GM13977 (cell line): ENCODE measurements at regions of chr15 and their contacts with region 1.

Region 1: DNA sequence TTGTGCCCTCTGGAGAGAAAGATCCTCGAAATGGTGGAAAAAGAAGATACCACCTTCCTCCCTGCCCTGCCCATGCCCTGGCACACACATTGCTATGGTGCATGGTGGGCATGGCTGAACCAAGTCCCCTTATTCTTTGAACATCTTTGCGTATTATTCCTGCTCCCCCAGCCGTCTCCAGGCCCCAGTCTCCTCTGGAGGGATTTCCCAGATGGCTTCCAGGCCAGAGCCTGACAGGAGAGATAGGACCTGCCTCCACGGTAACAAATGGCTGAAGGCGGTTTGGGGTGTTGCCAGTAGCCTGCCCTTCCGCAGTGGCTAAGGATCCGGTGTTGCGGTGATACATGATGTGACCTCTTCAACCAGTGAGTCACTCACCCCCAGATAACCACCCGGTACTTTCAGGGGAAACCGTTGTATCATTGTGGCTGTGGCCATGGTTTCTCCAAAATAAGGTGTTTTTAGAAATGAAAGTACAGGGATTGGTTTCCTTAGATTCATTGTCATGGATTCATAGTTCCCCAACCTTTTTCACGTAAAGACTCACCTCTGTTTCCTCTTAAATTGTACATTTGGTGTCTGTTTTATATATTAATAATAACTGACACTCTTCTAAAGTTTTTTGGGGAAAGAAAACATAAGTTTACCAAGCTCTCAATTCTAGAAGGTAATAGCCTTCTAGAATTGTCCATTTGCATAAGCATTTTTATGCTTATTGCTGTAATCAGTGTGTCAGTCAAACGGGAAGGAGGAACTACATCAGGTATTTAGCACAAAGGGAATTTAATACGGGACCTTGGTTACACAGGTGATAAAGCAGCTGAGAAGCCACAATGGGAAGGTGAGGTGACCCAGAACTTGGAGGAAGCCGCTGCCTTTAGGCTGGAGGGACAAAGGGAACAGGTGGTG is 25.9 kb downstream of the SMAD3 start:
- DNase-seq: peak; percentile 57
- CTCF ChIP-seq: no peak

Region 2: DNA sequence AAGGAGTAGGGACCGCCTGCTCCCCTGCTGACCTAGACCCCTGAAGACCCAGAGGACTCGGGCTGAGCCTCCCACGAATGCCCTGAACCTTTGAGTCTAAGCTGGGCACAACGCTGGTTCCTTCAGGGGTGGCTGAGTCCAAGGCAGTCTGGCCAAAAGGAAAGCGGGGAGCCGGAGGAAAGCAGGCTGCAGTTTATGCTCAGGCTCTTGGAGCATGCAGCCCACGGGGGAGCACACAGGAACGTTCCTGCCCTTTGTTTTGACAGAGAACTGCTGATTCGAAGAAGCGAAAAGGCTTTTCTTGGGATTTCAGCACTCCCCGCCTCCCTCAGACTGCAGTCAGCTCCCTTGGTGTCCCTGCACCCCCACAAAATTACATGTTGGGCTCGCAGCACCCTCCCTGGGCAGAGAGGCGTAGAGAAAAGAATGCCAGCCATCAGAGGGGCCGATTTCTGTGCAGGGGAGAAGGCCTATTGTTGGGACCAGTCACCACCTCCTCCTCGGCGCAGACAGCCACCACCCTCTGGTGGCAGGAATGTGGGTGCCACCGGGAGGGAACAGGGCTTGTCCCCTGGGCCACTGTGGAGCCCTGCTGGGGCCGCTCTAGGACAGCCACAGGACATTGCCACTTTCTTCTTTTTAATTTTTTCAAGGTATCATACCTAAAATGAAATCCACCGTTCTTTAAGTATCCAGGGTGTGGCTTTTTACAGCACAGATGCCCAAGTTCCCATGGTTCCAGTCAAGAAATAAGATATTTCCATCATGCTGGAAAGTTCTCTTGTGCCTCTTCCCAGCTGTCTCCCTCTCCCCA is 317.1 kb before region 1 on chr15:
- in situ Hi-C with region 1: no loop called
- DNase-seq: peak; percentile 81
- CTCF ChIP-seq: peak; percentile 78

Region 3: DNA sequence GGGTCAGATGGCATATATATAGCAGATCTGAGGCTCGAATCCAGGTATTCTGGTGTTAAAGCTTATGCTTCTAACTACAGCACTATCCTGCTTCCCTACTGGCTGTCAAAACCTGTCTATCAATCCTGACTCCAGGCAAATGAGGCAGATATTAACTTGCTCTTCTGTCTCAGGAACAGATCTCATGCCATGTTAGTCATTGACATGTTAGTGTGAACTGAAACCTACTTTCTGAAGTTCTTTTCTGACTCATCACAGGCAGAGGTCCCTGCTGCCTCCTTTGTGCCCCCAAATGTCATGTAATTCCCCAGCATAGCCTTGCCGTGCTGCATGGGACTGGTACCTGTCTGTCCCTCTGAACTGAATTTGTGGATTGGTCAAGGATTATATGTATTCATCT is 151.0 kb before region 1 on chr15:
- in situ Hi-C with region 1: no loop called
- DNase-seq: peak; percentile 67
- CTCF ChIP-seq: no peak

Region 4: DNA sequence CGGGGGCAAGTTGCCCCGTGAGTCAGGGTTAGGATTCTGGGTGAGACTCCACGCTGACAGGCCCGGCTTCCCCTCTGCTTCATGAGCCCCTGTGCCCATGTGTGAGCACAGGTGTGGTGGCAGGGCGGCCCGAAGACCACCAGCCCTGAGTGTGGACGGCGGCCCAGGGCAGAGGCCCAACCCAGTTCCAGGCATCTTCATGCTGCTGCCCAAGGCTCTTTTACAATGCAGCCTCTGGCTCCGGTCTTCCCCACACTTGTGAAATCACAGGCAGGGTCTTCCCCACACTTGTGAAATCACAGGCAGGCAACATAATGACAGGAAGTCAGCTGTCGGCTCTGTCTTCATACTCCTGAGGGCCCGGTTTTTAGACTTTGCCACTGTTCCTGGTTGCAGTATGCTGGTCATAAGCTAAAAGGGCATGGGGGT is 84.3 kb after region 1 on chr15:
- in situ Hi-C with region 1: loop called (anchors 10 kb)
- DNase-seq: peak; percentile 70
- CTCF ChIP-seq: no peak